ENCODE measurements at regions of chr7 and their contacts with region 1.

Region 1: DNA sequence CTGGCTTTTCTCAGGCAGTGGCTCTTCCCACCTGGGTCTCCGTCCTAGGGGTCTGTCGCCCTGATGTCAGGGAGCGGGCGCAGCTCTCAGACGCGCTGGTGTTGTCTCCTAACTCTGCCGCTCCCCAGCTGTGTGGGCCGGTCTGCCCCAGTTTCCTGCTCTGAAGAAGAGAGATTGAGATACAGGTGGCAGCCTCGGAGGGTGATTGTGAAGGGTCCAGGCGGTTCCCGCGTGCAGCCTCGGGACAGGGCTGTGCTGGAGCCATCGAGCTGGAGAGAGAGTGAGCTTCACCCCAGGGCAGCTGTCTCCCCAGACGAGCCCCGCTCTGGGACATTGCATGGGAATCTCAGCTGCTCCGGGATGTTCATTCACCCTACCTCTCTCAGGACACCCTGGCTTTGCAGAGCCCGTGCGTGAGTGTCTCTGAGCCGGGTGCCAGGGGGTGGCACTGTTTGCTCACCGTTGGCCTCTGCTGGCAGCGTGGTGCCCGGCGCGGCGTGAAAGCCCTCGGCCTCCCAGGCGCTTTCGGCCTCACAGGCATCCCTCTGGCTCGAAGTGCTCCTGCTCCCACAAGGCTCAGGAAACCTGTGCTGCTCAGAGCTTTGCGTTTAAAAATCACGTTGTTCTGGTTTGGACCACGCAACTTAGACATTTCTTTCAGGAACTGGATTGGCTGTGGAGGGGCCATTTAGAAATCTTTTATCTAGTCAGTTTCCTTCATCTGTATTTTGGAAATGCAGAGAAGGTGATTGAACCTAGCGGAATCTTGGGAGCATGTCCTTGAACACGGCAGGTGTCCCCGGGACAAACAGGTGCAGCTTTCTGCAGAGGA is 33.8 kb upstream of the ZFAND2A start:
- DNase-seq: no peak
- H3K4me3 ChIP-seq: no peak overlapping the region
- H3K27me3 ChIP-seq: peaks cover 1% of the 10 kb centered on the region
- CTCF ChIP-seq: peak; percentile 63

Region 2: DNA sequence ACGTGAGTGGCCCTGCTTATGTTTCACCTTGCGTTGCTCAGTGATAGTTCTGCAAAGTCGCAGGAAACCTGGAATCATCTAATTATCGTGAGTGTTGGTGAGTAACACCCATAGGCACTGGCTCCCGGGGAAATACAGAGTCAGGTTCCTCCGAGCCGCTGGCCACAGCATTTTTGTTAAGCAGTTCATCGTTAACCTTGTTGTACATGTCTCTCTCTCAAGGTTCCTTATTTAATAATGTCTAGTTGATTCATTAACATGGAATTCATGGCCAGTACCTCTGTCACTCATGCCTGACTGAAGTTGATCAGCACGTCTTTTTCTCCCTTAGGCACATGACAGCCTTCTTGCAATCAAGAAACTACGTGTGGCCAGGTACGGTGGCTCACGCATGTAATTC is 30.7 kb before region 1 on chr7:
- CTCF ChIA-PET with region 1: no interaction called
- POLR2A ChIA-PET with region 1: no interaction called
- DNase-seq: no peak
- H3K4me3 ChIP-seq: no peak overlapping the region
- H3K27me3 ChIP-seq: no peaks in the 10 kb centered on the region
- CTCF ChIP-seq: no peak

Region 3: GRCh38 chr7:1181640-1182039 is 12.2 kb before region 1 on chr7:
- CTCF ChIA-PET with region 1: interaction called, 32 read pairs
- POLR2A ChIA-PET with region 1: no interaction called
- DNase-seq: no peak
- H3K4me3 ChIP-seq: no peak overlapping the region
- H3K27me3 ChIP-seq: peaks cover 8% of the 10 kb centered on the region; the same call in 1 of the 2 replicates
- CTCF ChIP-seq: no peak

Region 4: GRCh38 chr7:1225441-1226185 is 31.8 kb after region 1 on chr7:
- CTCF ChIA-PET with region 1: interaction called, 12 read pairs
- POLR2A ChIA-PET with region 1: no interaction called
- DNase-seq: no peak
- H3K4me3 ChIP-seq: no peak overlapping the region
- H3K27me3 ChIP-seq: peaks cover 54% of the 10 kb centered on the region
- CTCF ChIP-seq: peak; percentile 50

Region 5: GRCh38 chr7:1432411-1433082 is 238.7 kb after region 1 on chr7:
- CTCF ChIA-PET with region 1: interaction called, 53 read pairs
- POLR2A ChIA-PET with region 1: no interaction called
- DNase-seq: no peak
- H3K4me3 ChIP-seq: no peak overlapping the region
- H3K27me3 ChIP-seq: no peaks in the 10 kb centered on the region
- CTCF ChIP-seq: peak; percentile 95

Measured in BJ (cell line).